Activated B cell treated with CpG ODN at 0.5 μM for 24 hours (primary cell): ENCODE measurements at regions of chr6 and their contacts with region 1.

Region 1: GRCh38 chr6:106085984-106086813 is at the start of gene PRDM1:
- DNase-seq: peak; percentile 84
- ATAC-seq: peak; percentile 87
- H3K4me3 Mint-ChIP-seq: peak within 1 kb of the TSS; percentile 90
- H3K27ac Mint-ChIP-seq: peak within 1 kb of the TSS; percentile 84
- H3K4me1 Mint-ChIP-seq: peaks cover 66% of the 10 kb centered on the region
- H3K27me3 Mint-ChIP-seq: peaks cover 5% of the 10 kb centered on the region
- CTCF ChIP-seq: no peak
- total RNA-seq, gene PRDM1: 16.3 and 16.4 TPM in 2 replicates

Region 2: GRCh38 chr6:105484238-105485161 is 601.7 kb before region 1 on chr6:
- CTCF ChIA-PET with region 1: interaction called, 3 read pairs
- POLR2A ChIA-PET with region 1: no interaction called
- intact Hi-C with region 1: loop called (anchors 1 kb)
- DNase-seq: no peak
- ATAC-seq: no peak
- H3K4me3 Mint-ChIP-seq: no peak overlapping the region
- H3K27ac Mint-ChIP-seq: no peak overlapping the region
- H3K4me1 Mint-ChIP-seq: peaks cover 2% of the 10 kb centered on the region
- H3K27me3 Mint-ChIP-seq: peaks cover 6% of the 10 kb centered on the region
- CTCF ChIP-seq: no peak

Region 3: GRCh38 chr6:105880030-105880492 is 206.1 kb before region 1 on chr6:
- CTCF ChIA-PET with region 1: no interaction called
- POLR2A ChIA-PET with region 1: interaction called, 3 read pairs
- intact Hi-C with region 1: loop called (anchors 5 kb)
- DNase-seq: no peak
- ATAC-seq: peak; percentile 63
- H3K4me3 Mint-ChIP-seq: peak overlapping the region; percentile 52
- H3K27ac Mint-ChIP-seq: peak overlapping the region; percentile 61
- H3K4me1 Mint-ChIP-seq: peaks cover 66% of the 10 kb centered on the region
- H3K27me3 Mint-ChIP-seq: no peaks in the 10 kb centered on the region
- CTCF ChIP-seq: no peak

Region 4: GRCh38 chr6:105992315-105992961 is 93.8 kb before region 1 on chr6:
- CTCF ChIA-PET with region 1: interaction called, 9 read pairs
- POLR2A ChIA-PET with region 1: interaction called, 58 read pairs
- intact Hi-C with region 1: loop called (anchors 1 kb)
- DNase-seq: peak; percentile 88
- ATAC-seq: peak; percentile 92
- H3K4me3 Mint-ChIP-seq: peak overlapping the region; percentile 96
- H3K27ac Mint-ChIP-seq: peak overlapping the region; percentile 97
- H3K4me1 Mint-ChIP-seq: peaks cover 24% of the 10 kb centered on the region
- H3K27me3 Mint-ChIP-seq: peaks cover 21% of the 10 kb centered on the region
- CTCF ChIP-seq: no peak

Region 5: GRCh38 chr6:106223300-106223930 is 137.2 kb after region 1 on chr6:
- CTCF ChIA-PET with region 1: interaction called, 65 read pairs
- POLR2A ChIA-PET with region 1: interaction called, 5 read pairs
- intact Hi-C with region 1: loop called (anchors 1 kb)
- DNase-seq: no peak
- ATAC-seq: peak; percentile 72
- H3K4me3 Mint-ChIP-seq: no peak overlapping the region
- H3K27ac Mint-ChIP-seq: no peak overlapping the region
- H3K4me1 Mint-ChIP-seq: peaks cover 8% of the 10 kb centered on the region
- H3K27me3 Mint-ChIP-seq: no peaks in the 10 kb centered on the region
- CTCF ChIP-seq: peak; percentile 17

Region 6: DNA sequence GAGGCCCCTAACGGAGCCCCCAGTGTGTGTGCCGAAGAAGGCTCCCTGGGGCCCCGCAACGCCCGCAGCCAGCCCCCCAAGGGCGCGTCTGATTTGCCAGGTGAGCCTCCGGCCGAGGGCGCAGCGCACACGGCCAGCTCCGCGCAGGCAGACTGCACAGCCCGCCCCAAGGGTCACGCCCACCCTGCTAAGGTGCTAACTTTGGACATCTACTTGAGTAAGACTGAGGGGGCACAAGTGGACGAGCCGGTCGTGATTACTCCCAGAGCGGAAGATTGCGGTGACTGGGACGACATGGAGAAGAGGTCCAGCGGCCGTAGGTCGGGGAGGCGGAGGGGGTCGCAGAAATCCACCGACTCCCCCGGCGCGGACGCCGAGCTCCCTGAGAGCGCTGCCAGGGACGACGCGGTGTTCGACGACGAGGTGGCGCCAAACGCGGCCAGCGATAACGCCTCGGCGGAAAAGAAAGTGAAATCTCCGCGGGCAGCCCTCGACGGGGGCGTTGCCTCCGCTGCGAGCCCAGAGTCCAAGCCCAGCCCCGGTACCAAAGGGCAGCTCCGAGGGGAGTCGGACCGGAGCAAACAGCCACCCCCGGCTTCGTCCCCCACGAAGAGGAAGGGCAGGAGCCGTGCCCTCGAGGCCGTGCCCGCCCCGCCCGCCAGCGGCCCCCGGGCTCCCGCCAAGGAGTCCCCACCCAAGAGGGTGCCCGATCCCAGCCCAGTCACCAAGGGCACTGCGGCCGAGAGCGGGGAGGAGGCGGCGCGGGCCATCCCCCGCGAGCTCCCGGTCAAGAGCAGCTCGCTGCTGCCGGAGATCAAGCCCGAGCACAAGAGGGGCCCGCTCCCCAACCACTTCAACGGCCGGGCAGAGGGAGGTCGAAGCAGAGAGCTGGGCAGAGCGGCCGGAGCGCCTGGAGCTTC is 426.1 kb after region 1 on chr6:
- CTCF ChIA-PET with region 1: no interaction called
- POLR2A ChIA-PET with region 1: no interaction called
- intact Hi-C with region 1: loop called (anchors 5 kb)
- DNase-seq: peak; percentile 79
- ATAC-seq: peak; percentile 68
- H3K4me3 Mint-ChIP-seq: peak overlapping the region; percentile 97
- H3K27ac Mint-ChIP-seq: peak overlapping the region; percentile 94
- H3K4me1 Mint-ChIP-seq: peaks cover 62% of the 10 kb centered on the region
- H3K27me3 Mint-ChIP-seq: no peaks in the 10 kb centered on the region
- CTCF ChIP-seq: no peak